Sciatic nerve (tissue), 2 donors: ENCODE measurements at regions of chr6 and their contacts with region 1.

Region 1: DNA sequence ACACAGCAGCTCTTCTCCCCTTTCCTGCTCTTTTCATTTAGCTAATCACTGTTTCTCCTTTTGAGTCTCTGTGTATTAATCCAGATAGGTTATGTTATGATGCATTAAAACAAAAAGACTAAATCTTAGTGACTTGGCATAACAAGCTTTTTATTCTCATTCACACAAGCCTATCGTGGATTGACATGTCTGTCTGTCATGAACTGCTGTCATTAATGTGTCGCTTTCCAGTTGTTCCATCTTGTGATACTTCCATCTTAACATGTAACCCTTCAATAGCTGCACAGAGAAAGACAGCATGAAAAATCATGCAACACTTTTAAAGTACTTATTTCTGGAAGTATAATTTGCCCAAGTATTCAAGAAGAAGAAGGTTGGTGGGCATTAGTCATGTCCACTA is 128.7 kb downstream of the GRIK2 start:
- DNase-seq: no peak
- ATAC-seq: no peak

Region 2: GRCh38 chr6:99768166-99768565 is 1754.1 kb before region 1 on chr6:
- intact Hi-C with region 1: loop called (anchors 5 kb)
- DNase-seq: no peak
- ATAC-seq: no peak

Region 3: GRCh38 chr6:101585501-101585900 is 63.2 kb after region 1 on chr6:
- intact Hi-C with region 1: no loop called
- DNase-seq: no peak
- ATAC-seq: no peak